AG04450 (cell line): ENCODE measurements at regions of chr2 and their contacts with region 1.

Region 1: DNA sequence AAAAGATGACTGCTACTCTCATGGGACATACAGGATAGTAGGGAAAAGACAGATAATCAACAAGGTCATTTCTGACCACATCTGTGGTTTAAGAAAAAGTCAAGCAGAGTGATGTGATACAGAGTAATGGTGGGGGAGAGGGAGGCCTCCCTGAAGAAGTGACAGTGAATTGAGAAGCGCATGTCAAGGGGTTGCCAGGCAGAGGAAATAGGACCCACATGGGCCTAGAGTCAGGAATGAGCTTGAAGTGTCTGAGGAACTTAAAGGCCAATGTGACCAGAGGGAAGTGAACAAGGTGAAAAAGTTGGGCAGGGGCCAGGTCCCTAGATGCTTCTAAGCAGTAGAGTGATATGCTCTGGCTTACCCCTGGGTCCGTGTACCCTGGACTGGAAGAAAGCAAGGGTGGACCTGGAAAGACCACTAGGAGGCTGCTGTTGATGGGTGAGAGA is 113.5 kb upstream of the PPP1CB start:
- DNase-seq: no peak
- H3K4me3 ChIP-seq: no peak overlapping the region
- H3K27ac ChIP-seq: no peak overlapping the region
- H3K27me3 ChIP-seq: no peaks in the 10 kb centered on the region
- CTCF ChIP-seq: no peak

Region 2: DNA sequence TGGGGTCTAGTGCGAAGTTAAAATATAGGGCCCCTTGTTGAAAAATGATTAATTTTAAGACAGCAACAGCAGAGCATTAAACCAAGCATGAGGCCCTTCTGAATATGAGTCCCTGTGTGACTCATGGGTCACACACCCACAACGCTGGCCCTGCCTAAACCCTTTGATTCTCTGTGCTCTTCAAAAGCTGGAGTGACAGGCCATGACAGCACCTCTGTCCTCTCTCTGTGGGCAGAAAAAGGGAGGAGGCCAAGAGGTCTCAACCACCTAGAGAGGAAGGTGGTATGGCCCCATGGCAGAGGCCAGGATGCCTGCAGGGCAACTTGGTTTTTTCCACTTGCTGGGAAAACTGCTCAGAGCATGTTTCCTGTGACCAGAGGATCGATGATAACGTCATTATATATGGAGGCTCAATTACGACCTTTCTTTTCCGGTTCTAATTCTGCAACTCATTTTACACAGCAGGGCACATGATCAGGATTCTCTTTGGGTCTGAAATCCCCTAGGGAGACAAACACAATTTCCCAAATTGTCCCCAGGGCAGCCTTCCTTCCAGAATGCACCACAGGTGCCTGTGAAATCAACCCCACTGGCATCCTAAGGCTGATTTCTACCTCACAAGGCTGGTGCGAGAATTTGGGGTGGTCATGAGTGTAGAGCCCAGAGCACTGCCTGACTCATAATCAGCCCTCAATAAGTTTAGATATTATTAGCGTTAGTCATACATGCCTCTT is 11.5 kb after region 1 on chr2:
- CTCF ChIA-PET with region 1: no interaction called
- POLR2A ChIA-PET with region 1: interaction called, 17 read pairs
- DNase-seq: no peak
- H3K4me3 ChIP-seq: no peak overlapping the region
- H3K27ac ChIP-seq: no peak overlapping the region
- H3K27me3 ChIP-seq: no peaks in the 10 kb centered on the region
- CTCF ChIP-seq: no peak

Region 3: DNA sequence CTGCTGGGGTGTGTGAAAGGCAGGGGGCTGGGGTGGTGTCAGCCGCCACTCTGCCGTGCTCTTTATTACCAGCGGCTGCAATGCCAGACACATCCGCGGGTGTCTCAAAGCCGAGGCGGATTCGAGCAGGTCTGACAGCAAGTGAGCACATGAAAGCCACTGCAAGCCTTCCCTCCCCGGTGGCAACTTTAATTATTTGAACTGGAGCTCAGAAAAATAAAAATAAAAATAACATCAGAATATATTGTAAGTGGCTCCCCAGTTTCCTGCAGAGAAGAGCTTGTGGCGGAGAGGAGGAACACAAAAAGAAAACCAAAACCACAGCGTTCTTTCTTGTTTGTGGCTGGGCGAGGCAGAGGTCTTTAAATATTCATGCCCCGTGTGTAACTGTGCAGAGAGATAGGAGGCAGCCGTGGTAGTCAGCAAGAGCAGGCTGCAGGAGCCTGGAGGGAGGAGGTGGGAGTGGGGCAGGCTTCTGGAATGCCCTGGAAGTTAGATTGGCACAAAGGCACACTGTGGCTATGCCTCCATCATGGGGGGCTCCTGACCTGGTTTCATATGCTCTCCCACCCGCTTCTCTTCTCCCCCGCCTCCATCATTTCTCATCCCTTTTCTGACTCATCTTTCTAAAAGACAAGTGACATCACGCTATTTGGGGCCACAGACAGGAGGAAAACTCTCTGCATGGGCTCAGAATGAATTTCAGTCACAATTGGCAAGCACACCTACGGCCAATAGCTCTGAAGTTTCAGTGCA is 676.9 kb after region 1 on chr2:
- CTCF ChIA-PET with region 1: no interaction called
- POLR2A ChIA-PET with region 1: no interaction called
- DNase-seq: no peak
- H3K4me3 ChIP-seq: no peak overlapping the region
- H3K27ac ChIP-seq: no peak overlapping the region
- H3K27me3 ChIP-seq: peaks cover 17% of the 10 kb centered on the region
- CTCF ChIP-seq: peak; percentile 26; the same call in 1 of the 2 replicates